Natural killer cell (primary cell): ENCODE measurements at regions of chr2 and their contacts with region 1.

Region 1: DNA sequence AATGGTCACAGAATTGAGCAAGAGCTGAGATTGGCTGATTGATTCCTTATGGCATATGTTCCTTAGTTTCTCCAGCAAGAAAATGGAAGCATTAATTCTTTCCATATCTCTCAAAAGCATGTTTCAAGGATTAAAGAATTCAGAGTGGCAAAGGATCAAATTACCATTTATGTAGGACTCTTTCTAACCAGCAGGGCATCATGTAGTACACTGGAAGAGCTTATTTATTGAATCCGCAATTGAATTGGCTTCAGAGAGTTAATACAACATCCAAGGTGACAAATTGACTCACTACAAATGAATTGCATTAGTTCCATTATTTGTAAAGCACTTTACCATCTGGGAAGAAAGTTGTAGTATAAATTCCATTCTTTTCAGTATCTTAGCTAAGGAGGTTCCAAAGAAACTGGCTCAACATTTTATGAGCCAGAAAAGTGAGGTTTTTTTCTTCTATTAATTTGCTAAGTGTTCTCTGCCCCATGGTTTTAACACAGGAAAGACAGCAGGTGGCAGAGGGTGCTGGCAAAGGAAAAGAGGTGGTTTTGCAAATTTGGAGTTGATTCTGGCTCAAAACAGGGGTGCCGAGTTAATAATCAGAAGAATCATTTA is 409.9 kb downstream of the MTX2 start:
- DNase-seq: peak in 1 of 2 donors; percentile 5
- ATAC-seq: no peak
- H3K4me3 ChIP-seq: no peak overlapping the region
- H3K4me3 Mint-ChIP-seq: no peak overlapping the region
- H3K27ac ChIP-seq: no peak overlapping the region
- H3K27ac Mint-ChIP-seq: no peak overlapping the region
- H3K4me1 ChIP-seq: no peaks in the 10 kb centered on the region
- H3K4me1 Mint-ChIP-seq: no peaks in the 10 kb centered on the region
- H3K27me3 ChIP-seq: peaks cover 6% of the 10 kb centered on the region
- H3K27me3 Mint-ChIP-seq: peaks cover 18 to 44% of the 10 kb centered on the region in 2 donors
- CTCF ChIP-seq: no peak

Region 2: DNA sequence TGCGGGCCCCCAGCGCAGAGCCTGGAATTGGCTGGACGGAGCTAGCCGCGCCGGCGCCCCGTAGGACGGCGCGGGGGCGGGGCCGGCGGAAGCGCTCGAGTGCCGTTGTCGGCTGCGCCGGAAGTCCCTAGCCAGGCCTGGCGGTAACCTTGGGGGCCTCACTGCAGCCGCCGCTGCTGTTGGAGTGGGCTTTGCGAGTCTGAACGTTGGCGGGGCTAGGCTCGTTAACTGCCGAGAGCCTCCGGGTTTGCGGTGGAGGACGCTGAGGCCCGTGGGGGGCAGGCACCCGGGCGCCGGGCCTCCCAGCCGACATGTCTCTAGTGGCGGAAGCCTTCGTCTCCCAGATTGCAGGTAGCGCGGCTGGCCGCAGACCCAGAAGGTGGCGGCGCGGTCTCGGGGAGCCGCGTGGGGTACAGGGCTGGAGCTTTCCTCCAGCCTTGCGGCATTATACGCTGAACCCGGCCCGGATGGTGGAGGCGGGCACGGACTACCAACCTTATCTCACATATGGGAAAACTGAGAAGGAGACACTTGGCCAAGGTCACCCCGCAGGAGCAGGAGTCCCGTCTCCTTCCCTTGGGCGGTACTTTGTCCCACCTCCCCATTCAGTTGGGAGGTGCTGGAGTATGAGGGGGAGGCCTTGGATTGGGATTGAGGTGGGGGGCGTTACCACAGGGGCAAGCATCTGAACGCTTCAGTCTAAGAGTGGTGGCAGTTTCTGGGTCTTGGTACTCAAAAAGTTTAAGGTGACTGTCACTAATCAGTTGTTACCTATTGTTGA is 409.7 kb before region 1 on chr2 and contains the start of gene MTX2:
- intact Hi-C with region 1: no loop called
- DNase-seq: peak; percentile 63 to 79
- ATAC-seq: peak; percentile 93 to 94 (median 93)
- H3K4me3 ChIP-seq: peak within 1 kb of the TSS; percentile 83
- H3K4me3 Mint-ChIP-seq: peak within 1 kb of the TSS; percentile 94
- H3K27ac ChIP-seq: peak within 1 kb of the TSS; percentile 77
- H3K27ac Mint-ChIP-seq: peak within 1 kb of the TSS; percentile 73 to 93
- H3K4me1 ChIP-seq: peaks cover 6% of the 10 kb centered on the region
- H3K4me1 Mint-ChIP-seq: peaks cover 26 to 27% of the 10 kb centered on the region in 2 donors
- H3K27me3 ChIP-seq: no peaks in the 10 kb centered on the region
- H3K27me3 Mint-ChIP-seq: peaks cover 3 to 8% of the 10 kb centered on the region in 2 donors
- CTCF ChIP-seq: no peak
- total RNA-seq, gene MTX2: 3.8 to 8.7 (median 7.7) TPM

Region 3: DNA sequence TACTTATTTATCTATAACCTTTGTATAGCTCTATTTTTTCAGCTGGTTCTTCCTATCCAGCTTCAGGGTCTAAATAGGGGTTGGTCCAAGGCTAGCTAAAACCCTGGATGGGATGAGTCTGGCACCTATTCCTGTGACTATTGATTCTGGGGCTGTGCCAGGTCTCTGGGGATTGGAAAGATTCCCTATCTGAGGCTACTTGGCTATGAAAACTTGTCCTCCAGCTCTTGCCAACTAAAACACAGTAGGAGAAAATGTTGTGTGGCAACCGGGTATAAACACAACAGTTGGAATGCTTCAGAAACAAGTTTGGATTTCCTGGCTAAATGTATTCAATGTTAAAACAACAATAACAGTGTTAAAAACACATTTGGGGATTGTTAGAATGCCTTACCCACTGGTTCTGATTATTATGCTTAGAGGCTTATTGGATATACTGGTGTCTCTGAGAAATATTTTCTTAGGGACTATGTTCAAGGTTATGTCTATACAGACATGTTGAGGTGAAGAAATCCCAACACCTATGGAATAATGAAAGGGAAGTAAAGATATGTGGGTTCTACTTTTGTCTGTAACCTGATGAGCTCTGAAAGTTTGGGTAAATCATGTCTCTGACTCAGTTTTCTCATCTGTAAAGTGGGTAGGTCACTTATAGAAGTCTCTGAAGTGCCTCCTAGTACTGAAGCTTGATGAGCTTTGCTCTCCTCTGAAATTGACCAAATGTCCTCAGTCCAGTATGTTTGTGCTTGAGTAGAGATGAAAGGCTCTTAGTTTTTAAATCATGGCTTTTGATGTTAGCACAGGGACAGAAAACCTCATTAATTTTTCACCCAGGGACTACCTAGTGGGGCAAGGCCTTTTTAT is 50.8 kb after region 1 on chr2:
- intact Hi-C with region 1: no loop called
- DNase-seq: no peak
- ATAC-seq: no peak
- H3K4me3 ChIP-seq: no peak overlapping the region
- H3K4me3 Mint-ChIP-seq: no peak overlapping the region
- H3K27ac ChIP-seq: no peak overlapping the region
- H3K27ac Mint-ChIP-seq: no peak overlapping the region
- H3K4me1 ChIP-seq: no peaks in the 10 kb centered on the region
- H3K4me1 Mint-ChIP-seq: no peaks in the 10 kb centered on the region
- H3K27me3 ChIP-seq: no peaks in the 10 kb centered on the region
- H3K27me3 Mint-ChIP-seq: peaks cover 0 to 13% of the 10 kb centered on the region in 2 donors
- CTCF ChIP-seq: no peak

Region 4: DNA sequence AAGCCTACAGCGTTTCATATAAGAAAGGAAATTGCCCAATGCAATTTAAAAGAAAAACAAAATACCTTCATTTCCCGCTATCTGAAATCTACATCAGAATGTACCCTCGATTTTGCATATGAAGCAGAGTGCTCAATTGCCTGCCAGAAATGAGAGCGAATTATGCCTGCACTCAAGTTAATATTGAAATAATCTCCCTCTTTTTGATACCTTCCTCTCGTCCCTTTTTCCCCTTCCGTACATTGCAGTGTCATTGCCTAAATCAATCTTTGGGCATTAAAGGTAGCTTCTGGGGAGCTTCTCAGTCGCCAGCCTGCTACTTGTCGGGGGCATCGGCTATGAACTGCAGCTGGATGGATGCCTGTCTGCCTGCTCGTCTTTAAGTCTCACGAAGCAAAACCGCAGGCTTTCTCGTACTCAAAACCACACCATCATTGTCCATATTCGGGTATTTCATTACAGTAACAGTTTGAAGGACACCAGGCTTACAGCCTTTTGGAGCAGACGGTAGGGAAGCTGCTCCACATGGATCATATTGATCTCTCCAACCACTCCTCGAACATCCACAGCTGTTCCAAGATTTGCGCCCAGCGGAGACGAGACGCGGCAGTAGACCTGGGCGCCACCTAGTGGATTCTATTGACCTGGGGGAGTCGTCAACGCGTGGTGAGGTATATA is 469.5 kb after region 1 on chr2:
- intact Hi-C with region 1: loop called (anchors 1 kb)
- DNase-seq: peak; percentile 53 to 86
- ATAC-seq: peak; percentile 89 to 92 (median 91)
- H3K4me3 ChIP-seq: peak overlapping the region; percentile 29
- H3K4me3 Mint-ChIP-seq: peak overlapping the region; percentile 90
- H3K27ac ChIP-seq: no peak overlapping the region
- H3K27ac Mint-ChIP-seq: peak overlapping the region in 1 of 2 donors; percentile 42
- H3K4me1 ChIP-seq: peaks cover 8% of the 10 kb centered on the region
- H3K4me1 Mint-ChIP-seq: peaks cover 11 to 12% of the 10 kb centered on the region in 2 donors
- H3K27me3 ChIP-seq: peaks cover 26% of the 10 kb centered on the region
- H3K27me3 Mint-ChIP-seq: peaks cover 44 to 54% of the 10 kb centered on the region in 2 donors
- CTCF ChIP-seq: peak; percentile 92